ENCODE measurements at regions of chr17 and their contacts with region 1.

Region 1: GRCh38 chr17:80761110-80761871 is 216.7 kb downstream of the RPTOR start:
- DNase-seq: peak; percentile 86
- ATAC-seq: peak; percentile 82
- H3K4me3 Mint-ChIP-seq: peak overlapping the region; percentile 60
- H3K27ac Mint-ChIP-seq: peak overlapping the region; percentile 98
- H3K4me1 Mint-ChIP-seq: peaks cover 77% of the 10 kb centered on the region
- H3K27me3 Mint-ChIP-seq: no peaks in the 10 kb centered on the region

Region 2: DNA sequence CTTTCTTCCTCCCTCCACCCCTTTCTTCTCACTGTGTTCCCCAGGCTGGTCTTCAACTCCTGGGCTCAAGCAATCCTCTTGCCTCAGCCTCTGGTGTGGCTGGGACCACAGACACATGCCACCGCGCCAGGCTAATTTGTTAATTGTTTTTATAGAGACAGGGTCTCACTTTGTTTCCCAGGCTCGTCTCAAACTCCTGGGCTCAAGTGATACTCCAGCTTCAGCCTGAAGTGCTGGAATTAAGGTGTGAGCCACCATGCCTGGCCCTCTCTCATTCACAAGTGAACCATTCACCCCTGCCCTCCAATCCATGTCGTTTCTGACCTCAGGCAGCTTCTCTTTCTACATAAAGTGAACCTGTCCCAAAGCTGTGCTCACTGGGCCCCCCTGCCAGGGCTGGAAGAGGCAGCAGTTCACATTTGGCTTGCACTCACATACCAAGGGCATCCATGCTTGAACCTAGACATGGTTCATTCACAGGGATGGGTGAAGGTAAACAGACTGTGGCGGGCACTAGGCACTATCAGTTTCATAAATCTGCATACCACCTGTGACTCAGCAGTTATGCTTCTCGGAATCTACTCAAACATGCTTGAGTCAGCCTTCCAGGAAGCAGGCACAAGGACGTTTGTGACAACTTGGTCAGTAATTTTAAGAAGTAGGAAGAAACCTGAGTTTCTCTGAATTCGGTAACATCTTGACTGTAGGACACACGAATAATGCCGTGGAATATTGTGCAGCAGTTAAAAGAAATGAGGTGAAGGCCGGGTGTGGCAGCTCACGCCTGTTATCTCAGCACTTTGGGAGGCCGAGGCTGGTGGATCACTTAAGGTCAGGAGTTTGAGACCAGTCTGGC is 506.7 kb before region 1 on chr17:
- CTCF ChIA-PET with region 1: no interaction called
- POLR2A ChIA-PET with region 1: no interaction called
- intact Hi-C with region 1: loop called in 1 of 2 experiments (anchors 2 kb)
- DNase-seq: peak; percentile 83
- ATAC-seq: peak; percentile 62
- H3K4me3 Mint-ChIP-seq: peak overlapping the region; percentile 64
- H3K27ac Mint-ChIP-seq: peak overlapping the region; percentile 97
- H3K4me1 Mint-ChIP-seq: peaks cover 71% of the 10 kb centered on the region
- H3K27me3 Mint-ChIP-seq: no peaks in the 10 kb centered on the region

Region 3: GRCh38 chr17:80720610-80721577 is 40.4 kb before region 1 on chr17:
- CTCF ChIA-PET with region 1: no interaction called
- POLR2A ChIA-PET with region 1: no interaction called
- intact Hi-C with region 1: loop called (anchors 1 kb)
- DNase-seq: peak; percentile 87
- ATAC-seq: peak; percentile 94
- H3K4me3 Mint-ChIP-seq: peak overlapping the region; percentile 46
- H3K27ac Mint-ChIP-seq: peak overlapping the region; percentile 88
- H3K4me1 Mint-ChIP-seq: peaks cover 51% of the 10 kb centered on the region
- H3K27me3 Mint-ChIP-seq: no peaks in the 10 kb centered on the region

Region 4: DNA sequence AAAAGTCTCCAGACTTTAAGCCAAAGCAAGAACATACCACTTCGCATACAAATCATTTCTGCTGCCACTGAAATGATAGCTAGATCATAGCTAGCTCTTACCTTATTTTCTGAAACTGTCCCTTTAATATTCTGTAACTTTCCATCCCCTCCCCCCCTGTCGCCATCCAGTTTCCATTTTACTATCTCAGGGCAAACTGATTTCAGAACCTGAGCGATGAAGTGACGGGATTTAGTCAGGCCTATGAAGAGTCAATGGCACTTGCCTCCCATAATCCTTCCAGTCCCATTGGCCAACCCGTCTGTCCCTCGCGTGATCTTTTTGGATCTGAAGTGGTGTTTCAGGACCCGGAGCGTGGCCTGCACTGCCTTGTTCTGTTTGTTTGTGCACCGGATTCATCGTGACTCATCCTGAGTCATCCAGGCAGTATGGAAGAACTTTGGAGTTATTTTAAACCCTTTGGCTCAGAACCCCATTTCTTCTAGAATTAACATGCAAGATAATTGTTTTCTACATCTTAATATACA is 30.5 kb after region 1 on chr17:
- CTCF ChIA-PET with region 1: interaction called, 3 read pairs
- POLR2A ChIA-PET with region 1: no interaction called
- intact Hi-C with region 1: loop called (anchors 1 to 2 kb)
- DNase-seq: peak; percentile 76
- ATAC-seq: peak; percentile 65
- H3K4me3 Mint-ChIP-seq: peak overlapping the region; percentile 56
- H3K27ac Mint-ChIP-seq: peak overlapping the region; percentile 97
- H3K4me1 Mint-ChIP-seq: peaks cover 88% of the 10 kb centered on the region
- H3K27me3 Mint-ChIP-seq: no peaks in the 10 kb centered on the region

Region 5: GRCh38 chr17:80845863-80846671 is 84.8 kb after region 1 on chr17:
- CTCF ChIA-PET with region 1: no interaction called
- POLR2A ChIA-PET with region 1: no interaction called
- intact Hi-C with region 1: no loop called
- DNase-seq: no peak
- ATAC-seq: no peak
- H3K4me3 Mint-ChIP-seq: no peak overlapping the region
- H3K27ac Mint-ChIP-seq: peak overlapping the region; percentile 93
- H3K4me1 Mint-ChIP-seq: peaks cover 49% of the 10 kb centered on the region
- H3K27me3 Mint-ChIP-seq: no peaks in the 10 kb centered on the region

Region 6: DNA sequence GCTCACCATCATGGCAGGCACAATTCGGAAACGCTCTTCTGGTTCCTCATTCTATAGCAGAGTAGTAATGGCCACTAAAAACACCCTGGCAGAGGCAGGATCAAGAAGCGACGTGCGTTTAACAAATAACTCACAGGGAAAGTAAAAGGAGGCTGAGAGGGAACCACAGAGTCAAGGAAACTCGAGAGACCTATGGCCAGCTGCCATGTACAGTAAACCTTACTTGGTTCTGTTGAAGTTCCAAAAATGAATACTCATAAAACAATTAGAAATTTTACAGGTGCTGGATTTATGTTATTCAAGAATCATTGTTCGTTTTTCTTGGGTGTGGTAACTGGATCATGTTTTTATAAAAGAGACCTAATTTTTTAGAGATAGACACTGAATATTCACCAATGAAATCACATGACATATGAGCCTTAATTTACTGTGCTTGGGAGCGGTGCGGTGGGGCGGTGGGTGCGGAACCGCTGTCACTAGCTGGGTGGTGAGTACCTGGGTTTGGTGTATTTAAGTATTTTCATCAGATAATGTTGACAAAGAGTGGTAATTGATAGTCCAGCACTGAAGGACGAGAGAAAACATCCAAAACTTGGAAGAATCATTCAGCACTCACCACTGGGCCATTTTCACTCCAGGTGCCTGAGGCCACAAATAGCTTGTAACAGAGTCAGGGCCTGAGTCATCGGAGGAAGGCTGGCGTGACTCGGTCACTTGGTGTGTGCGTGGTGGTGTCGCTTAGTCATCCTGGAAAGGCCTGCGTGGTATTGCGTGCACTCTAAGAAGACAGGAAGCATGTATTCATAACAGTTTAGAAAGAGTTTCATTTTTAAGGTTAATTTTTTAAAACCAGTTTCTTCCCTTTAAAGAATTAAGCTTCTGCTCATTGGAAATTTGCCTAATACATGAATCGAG is 94.9 kb after region 1 on chr17:
- CTCF ChIA-PET with region 1: interaction called, 3 read pairs
- POLR2A ChIA-PET with region 1: interaction called, 3 read pairs
- intact Hi-C with region 1: loop called (anchors 1 to 5 kb)
- DNase-seq: peak; percentile 95
- ATAC-seq: peak; percentile 98
- H3K4me3 Mint-ChIP-seq: peak overlapping the region; percentile 28
- H3K27ac Mint-ChIP-seq: peak overlapping the region; percentile 92
- H3K4me1 Mint-ChIP-seq: peaks cover 57% of the 10 kb centered on the region
- H3K27me3 Mint-ChIP-seq: no peaks in the 10 kb centered on the region

Region 7: DNA sequence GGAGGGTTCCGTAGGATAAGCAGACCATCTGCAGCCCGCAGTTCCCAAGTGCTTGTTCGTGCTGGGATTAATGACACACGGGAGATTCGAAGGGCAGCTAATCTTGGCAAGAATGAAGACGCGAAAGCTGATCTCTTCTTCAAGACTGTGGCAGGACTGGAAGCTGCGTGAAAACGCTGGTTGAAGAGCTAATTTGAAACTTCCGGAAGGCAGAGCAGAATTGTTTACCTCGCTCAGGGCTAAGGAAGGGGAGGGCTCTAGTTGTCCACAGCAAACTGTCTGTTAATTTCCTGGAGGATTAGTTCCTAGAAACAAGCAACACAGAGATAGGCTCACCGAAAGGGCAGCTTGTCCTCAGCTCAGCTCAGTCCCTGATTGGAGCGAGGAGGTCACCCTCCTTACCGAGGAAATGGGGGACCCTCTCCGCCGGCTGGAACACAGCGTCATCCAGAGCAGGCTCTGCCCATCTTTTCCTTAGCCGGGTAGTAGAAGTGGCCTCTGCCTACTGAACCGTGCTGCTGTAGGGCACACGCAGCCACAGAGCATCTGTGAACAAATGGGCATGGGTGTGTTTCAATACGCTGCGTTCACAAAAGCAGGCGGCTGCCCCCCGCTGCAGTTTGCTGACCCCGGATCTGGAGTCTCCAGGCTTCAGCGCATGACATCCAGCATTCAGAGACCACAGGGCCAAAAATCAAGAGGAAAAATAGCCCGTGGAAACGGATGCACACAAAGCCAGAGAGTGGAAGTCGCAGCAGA is 256.9 kb after region 1 on chr17:
- CTCF ChIA-PET with region 1: no interaction called
- POLR2A ChIA-PET with region 1: no interaction called
- intact Hi-C with region 1: no loop called
- DNase-seq: peak; percentile 54
- ATAC-seq: peak; percentile 84
- H3K4me3 Mint-ChIP-seq: peak overlapping the region; percentile 64
- H3K27ac Mint-ChIP-seq: peak overlapping the region; percentile 87
- H3K4me1 Mint-ChIP-seq: peaks cover 17% of the 10 kb centered on the region
- H3K27me3 Mint-ChIP-seq: no peaks in the 10 kb centered on the region

Measured in activated CD4-positive, alpha-beta T cell treated with anti-CD3 and anti-CD28 coated beads for 36 hours (primary cell).